ENCODE measurements at regions of chr5 and their contacts with region 1.

Region 1: GRCh38 chr5:134176511-134177368 is at the start of gene SKP1:
- DNase-seq: peak; percentile 59 to 84
- H3K4me3 ChIP-seq: peak within 1 kb of the TSS; percentile 93
- H3K27ac ChIP-seq: peak within 1 kb of the TSS; percentile 93
- H3K4me1 ChIP-seq: peaks cover 23% of the 10 kb centered on the region
- H3K27me3 ChIP-seq: no peaks in the 10 kb centered on the region
- CTCF ChIP-seq: no peak
- total RNA-seq, gene SKP1: 335 and 409 TPM in 2 replicates

Region 2: DNA sequence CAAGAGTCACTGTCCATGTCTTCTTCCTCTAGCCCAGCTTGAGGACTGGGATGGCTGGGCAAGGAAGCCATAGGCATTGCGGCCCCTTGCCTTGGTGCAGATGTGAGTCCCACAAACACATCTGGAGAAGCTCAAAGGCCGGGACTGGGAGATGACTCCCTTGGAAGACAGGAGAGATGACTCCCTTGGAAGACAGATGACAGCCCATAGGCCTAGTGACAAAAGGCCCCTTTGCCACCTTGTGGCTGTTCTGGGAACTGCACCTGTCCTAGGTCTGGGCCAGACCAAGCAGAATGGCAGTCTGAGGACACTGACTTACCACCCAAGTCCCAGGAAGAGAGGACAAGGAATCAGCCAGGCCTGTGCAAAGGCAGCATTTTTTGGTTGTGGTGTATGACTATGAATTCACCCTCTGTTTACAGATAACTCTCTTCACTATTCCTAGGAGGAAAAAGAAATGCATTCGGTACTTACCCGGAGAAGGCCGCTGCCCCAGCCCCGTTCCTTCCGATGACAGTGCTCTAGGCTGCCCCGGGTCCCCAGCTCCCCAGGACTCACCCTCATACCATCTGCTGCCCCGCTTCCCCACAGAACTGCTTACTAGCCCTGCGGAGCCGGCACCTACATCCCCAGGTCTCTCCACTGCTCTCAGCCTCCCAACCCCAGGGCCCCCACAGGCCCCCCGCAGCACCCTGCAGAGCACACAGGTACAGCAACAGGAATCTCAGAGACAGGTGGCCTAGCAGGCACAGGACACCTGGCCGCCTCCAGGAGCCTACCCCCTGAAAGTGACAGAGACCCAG is 30.8 kb before region 1 on chr5:
- CTCF ChIA-PET with region 1: no interaction called
- POLR2A ChIA-PET with region 1: interaction called, 11 read pairs
- intact Hi-C with region 1: no loop called
- DNase-seq: peak; percentile 49 to 71
- H3K4me3 ChIP-seq: no peak overlapping the region
- H3K27ac ChIP-seq: no peak overlapping the region
- H3K4me1 ChIP-seq: peaks cover 17% of the 10 kb centered on the region
- H3K27me3 ChIP-seq: no peaks in the 10 kb centered on the region
- CTCF ChIP-seq: peak; percentile 96

Measured in PC-9 (cell line).